ENCODE measurements at regions of chr1 and their contacts with region 1.

Region 1: DNA sequence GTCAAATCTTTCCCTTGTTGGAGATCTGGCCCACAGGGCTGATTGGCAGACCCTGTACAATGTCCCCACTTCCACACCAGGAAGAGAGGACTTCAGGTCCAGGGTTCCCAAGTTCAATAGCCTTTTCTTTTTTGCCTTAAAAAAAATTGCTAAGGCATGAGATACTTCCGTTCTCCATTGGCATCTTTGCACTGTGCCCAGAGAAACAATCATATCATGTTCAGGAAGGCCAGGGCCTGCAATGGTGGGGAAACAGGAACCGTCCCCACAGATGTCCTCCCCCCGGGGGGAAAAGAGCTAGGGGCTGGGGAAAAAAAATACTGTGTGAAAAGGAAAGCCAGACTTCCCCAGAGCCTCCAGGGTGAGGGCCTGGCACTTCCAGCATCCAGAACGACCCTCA is 24.6 kb upstream of the GJA8 start:
- DNase-seq: no peak
- H3K4me3 ChIP-seq: no peak overlapping the region
- H3K27ac ChIP-seq: no peak overlapping the region
- H3K4me1 ChIP-seq: no peaks in the 10 kb centered on the region
- H3K27me3 ChIP-seq: no peaks in the 10 kb centered on the region
- CTCF ChIP-seq: no peak

Region 2: GRCh38 chr1:147177611-147178380 is 700.2 kb before region 1 on chr1:
- CTCF ChIA-PET with region 1: no interaction called
- POLR2A ChIA-PET with region 1: no interaction called
- intact Hi-C with region 1: no loop called
- DNase-seq: no peak
- H3K4me3 ChIP-seq: no peak overlapping the region
- H3K27ac ChIP-seq: no peak overlapping the region
- H3K4me1 ChIP-seq: peaks cover 11% of the 10 kb centered on the region
- H3K27me3 ChIP-seq: no peaks in the 10 kb centered on the region
- CTCF ChIP-seq: no peak

Region 3: DNA sequence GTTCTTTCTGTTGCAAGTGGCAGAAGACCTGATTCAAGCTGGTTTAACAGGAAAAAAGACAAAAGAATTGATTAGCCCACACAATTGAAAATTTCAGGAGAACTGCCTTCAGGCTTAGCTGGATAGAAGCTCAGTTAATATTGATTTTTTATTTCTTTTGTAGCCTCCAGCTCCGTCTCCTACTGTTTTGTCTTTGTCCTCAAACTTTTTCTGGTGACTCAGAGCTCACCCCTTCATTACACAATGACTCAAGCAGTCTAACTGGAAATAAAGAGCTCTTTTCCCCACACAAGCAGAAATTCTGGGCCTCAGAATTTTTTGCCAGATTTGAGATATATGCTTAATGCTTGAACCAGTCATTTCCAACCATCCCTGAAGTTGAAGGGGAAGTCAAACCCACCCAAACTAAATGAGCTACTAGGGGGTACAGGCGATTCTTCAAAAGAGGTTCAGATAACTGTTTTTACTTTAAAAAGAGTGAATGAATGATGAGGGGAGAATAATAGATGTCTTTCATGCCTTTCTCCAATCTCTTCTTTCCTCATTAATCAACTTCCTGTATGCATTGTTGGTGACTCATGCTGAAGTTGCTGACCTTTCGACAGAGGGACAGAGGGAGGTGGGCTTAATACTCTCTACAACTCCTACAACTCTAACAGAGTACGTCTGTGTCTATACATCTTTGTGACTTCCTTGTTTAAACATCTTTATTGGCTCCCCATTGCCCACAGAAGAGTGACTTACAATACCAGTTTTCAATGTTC is 201.6 kb before region 1 on chr1:
- CTCF ChIA-PET with region 1: no interaction called
- POLR2A ChIA-PET with region 1: no interaction called
- intact Hi-C with region 1: no loop called
- DNase-seq: peak; percentile 21 to 77
- H3K4me3 ChIP-seq: peak overlapping the region; percentile 12; the same call in 1 of the 2 replicates
- H3K27ac ChIP-seq: peak overlapping the region; percentile 78
- H3K4me1 ChIP-seq: peaks cover 35% of the 10 kb centered on the region
- H3K27me3 ChIP-seq: no peaks in the 10 kb centered on the region
- CTCF ChIP-seq: no peak

Region 4: GRCh38 chr1:147717063-147717565 is 160.9 kb before region 1 on chr1:
- CTCF ChIA-PET with region 1: no interaction called
- POLR2A ChIA-PET with region 1: no interaction called
- intact Hi-C with region 1: no loop called
- DNase-seq: peak; percentile 82 to 100
- H3K4me3 ChIP-seq: no peak overlapping the region
- H3K27ac ChIP-seq: peak overlapping the region; percentile 82
- H3K4me1 ChIP-seq: peaks cover 73% of the 10 kb centered on the region
- H3K27me3 ChIP-seq: no peaks in the 10 kb centered on the region
- CTCF ChIP-seq: no peak

Region 5: GRCh38 chr1:147747966-147748365 is 130.1 kb before region 1 on chr1:
- CTCF ChIA-PET with region 1: interaction called, 10 read pairs
- POLR2A ChIA-PET with region 1: no interaction called
- intact Hi-C with region 1: no loop called
- DNase-seq: no peak
- H3K4me3 ChIP-seq: no peak overlapping the region
- H3K27ac ChIP-seq: no peak overlapping the region
- H3K4me1 ChIP-seq: peaks cover 31% of the 10 kb centered on the region
- H3K27me3 ChIP-seq: no peaks in the 10 kb centered on the region
- CTCF ChIP-seq: no peak

Measured in PC-9 (cell line).